ENCODE measurements at regions of chr14 and their contacts with region 1.

Region 1: DNA sequence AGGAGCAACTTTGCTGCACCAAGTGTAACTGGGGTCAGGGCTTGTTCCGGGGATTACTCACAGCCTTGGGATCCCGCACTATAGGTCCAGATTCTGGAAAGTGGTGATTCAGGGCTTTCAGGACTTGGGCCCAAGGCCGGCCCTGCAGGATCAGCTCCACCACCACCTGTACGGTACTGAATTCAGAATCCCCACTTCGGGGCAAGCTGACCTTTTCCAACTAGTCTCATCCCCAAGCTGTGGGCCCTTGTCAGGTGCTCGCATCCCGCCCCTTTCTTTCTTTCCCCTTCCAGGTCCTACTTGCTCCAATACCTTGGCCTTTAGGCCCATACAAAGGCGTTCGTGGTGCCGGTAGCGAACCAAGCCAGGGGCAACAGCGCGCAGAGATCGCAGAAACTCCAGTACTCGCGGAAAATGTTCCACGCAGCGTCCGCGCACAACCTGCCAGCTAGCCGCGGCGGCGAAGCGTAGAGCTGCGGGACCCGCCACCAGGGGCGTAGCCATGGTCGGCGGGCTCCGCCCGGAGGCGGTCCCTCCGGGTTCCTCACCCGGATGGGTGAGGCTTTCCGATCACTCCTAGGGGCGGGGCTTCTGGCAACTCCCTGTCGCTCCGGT is 487 bp downstream of the TINF2 start:
- DNase-seq: peak; percentile 93
- H3K4me3 Mint-ChIP-seq: peak overlapping the region; percentile 96
- H3K27ac Mint-ChIP-seq: peak overlapping the region; percentile 99
- H3K4me1 Mint-ChIP-seq: peaks cover 58% of the 10 kb centered on the region
- H3K27me3 Mint-ChIP-seq: no peaks in the 10 kb centered on the region

Region 2: DNA sequence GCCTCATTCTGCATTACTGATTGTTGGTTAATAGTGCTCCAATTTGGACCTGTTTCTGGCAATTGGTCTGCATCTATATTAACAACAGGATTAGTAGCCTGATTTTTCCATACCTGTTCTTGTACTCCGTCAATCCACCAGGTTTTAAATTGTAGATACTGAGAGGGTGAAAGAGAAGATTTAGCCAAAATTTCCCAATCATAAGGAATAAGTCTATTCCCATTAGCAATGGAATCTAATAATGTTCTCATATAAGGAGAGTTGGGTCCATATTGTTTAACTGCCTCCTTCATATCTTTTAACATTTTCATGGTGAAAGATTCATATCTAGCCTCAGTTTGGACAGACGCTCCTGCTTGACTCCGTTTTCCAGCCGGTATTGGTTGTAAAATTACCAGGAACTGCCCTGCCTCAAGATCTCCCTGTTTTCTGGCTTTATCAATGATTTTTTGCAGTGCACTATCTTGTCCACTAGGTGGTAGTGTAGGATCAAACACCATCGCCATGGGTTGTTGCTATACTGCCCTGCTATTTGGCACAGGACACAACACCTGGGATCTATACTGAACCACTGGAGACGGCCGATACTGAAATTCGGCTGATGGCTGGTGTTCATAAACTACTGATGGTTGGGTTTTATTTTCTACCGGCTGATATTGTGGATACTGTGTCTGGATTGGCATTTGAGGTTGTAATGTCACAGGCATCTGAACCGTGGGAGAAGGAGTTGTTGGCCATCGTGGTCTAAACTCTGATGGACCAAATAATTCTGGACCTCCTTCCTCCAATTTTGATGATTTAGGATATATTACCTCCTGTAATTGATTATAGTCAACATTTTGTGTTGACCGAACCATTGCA is 228.1 kb before region 1 on chr14:
- intact Hi-C with region 1: loop called (anchors 2 kb)
- DNase-seq: peak; percentile 57
- H3K4me3 Mint-ChIP-seq: no peak overlapping the region
- H3K27ac Mint-ChIP-seq: no peak overlapping the region
- H3K4me1 Mint-ChIP-seq: peaks cover 23% of the 10 kb centered on the region
- H3K27me3 Mint-ChIP-seq: peaks cover 7% of the 10 kb centered on the region

Region 3: GRCh38 chr14:24215495-24216344 is 26.2 kb before region 1 on chr14 and contains the start of gene MDP1:
- intact Hi-C with region 1: loop called (anchors 1 kb)
- DNase-seq: peak; percentile 85
- H3K4me3 Mint-ChIP-seq: peak within 1 kb of the TSS; percentile 90
- H3K27ac Mint-ChIP-seq: peak within 1 kb of the TSS; percentile 96
- H3K4me1 Mint-ChIP-seq: peaks cover 43% of the 10 kb centered on the region
- H3K27me3 Mint-ChIP-seq: no peaks in the 10 kb centered on the region
- total RNA-seq, gene MDP1: 11.6 and 12.9 TPM in 2 replicates

Region 4: GRCh38 chr14:24289649-24290249 is 47.8 kb after region 1 on chr14:
- intact Hi-C with region 1: loop called (anchors 2 kb)
- DNase-seq: peak; percentile 44
- H3K4me3 Mint-ChIP-seq: no peak overlapping the region
- H3K27ac Mint-ChIP-seq: no peak overlapping the region
- H3K4me1 Mint-ChIP-seq: peaks cover 25% of the 10 kb centered on the region
- H3K27me3 Mint-ChIP-seq: peaks cover 14% of the 10 kb centered on the region

Region 5: GRCh38 chr14:24310646-24311604 is 69.0 kb after region 1 on chr14 and contains the start of gene LTB4R:
- intact Hi-C with region 1: loop called (anchors 1 kb)
- DNase-seq: peak; percentile 59
- H3K4me3 Mint-ChIP-seq: peak within 1 kb of the TSS; percentile 85
- H3K27ac Mint-ChIP-seq: peak within 1 kb of the TSS; percentile 84
- H3K4me1 Mint-ChIP-seq: peaks cover 81% of the 10 kb centered on the region
- H3K27me3 Mint-ChIP-seq: peaks cover 1% of the 10 kb centered on the region
- total RNA-seq, gene LTB4R: 10.1 and 11.1 TPM in 2 replicates

Region 6: GRCh38 chr14:24431569-24432258 is 189.8 kb after region 1 on chr14:
- intact Hi-C with region 1: loop called (anchors 1 kb)
- DNase-seq: peak; percentile 85
- H3K4me3 Mint-ChIP-seq: peak overlapping the region; percentile 90
- H3K27ac Mint-ChIP-seq: peak overlapping the region; percentile 95
- H3K4me1 Mint-ChIP-seq: peaks cover 51% of the 10 kb centered on the region
- H3K27me3 Mint-ChIP-seq: no peaks in the 10 kb centered on the region

Measured in activated T-helper 1 cell treated with anti-CD3 and anti-CD28 coated beads, Interleukin-12 subunit alpha, Interleukin-12 subunit beta, Interleukin-2, Interleukin-4 antibody, amounts not matched to agents 30 ng/mL and 10 ng/mL and 1 ng/mL, durations not matched to agents 14 hours and 24 hours and 36 hours (primary cell).